ENCODE measurements at regions of chr4 and their contacts with region 1.

Region 1: GRCh38 chr4:83074086-83074704 is 39.2 kb downstream of the COPS4 start:
- DNase-seq: peak; percentile 70
- H3K4me3 Mint-ChIP-seq: peak overlapping the region; percentile 45
- H3K27ac Mint-ChIP-seq: peak overlapping the region; percentile 74
- H3K4me1 Mint-ChIP-seq: peaks cover 18% of the 10 kb centered on the region
- H3K27me3 Mint-ChIP-seq: no peaks in the 10 kb centered on the region

Region 2: DNA sequence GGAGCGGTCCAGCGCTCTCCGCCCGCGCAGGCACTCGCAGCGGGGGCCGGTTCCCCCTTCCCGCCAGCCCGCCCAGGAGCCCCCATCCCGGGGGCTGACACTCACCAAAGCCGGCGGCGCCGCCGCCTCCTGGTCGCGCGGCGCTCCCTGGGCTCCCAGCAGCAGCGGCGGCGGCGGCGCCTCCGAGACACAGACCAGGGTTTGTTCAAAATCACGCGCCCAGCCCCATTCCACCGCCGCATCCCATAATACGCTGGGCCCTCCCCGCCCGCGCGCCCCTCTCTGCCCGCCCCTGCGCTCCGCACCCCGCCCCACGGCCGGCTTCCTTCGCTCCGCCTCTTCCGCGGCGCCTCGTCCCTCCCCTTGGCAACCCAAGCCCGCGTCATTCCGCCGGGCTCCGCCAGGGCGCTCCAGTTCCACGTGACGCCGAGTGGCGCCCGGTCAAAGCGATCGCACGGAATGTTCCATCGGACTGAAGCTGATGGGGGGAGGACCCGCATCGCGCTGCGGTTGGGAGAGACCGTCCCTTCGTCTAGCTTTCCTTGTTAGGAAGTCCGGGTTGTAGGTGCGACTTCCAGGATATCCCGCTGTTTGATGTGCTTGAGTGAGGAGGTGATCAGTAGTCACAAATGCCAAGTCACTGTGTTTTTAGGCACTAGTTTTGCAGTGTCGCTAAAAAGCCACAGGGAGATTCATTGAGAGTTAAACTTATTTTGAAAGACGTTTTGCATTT is 61.3 kb before region 1 on chr4:
- CTCF ChIA-PET with region 1: no interaction called
- DNase-seq: peak; percentile 97
- H3K4me3 Mint-ChIP-seq: peak overlapping the region; percentile 91
- H3K27ac Mint-ChIP-seq: peak overlapping the region; percentile 94
- H3K4me1 Mint-ChIP-seq: peaks cover 43% of the 10 kb centered on the region
- H3K27me3 Mint-ChIP-seq: no peaks in the 10 kb centered on the region

Region 3: DNA sequence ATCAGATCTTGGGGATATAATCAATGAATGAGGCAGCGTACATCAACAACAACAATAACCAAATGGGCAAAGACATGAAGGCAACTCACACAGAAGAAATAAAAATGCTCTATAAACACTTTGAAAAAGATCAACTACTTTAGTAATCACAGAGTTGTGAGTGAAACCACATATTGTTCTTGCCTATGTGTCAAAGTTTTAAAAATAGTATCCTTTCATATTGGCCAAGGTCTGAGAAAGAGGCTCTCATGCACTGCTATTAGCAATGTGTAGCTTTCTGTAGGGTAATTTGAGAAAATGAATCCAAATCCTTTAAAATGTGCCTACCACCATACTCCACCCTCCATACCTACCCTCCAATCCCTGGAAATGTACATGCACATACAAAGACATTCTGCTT is 185.4 kb after region 1 on chr4:
- CTCF ChIA-PET with region 1: interaction called, 24 read pairs
- DNase-seq: no peak
- H3K4me3 Mint-ChIP-seq: no peak overlapping the region
- H3K27ac Mint-ChIP-seq: no peak overlapping the region
- H3K4me1 Mint-ChIP-seq: peaks cover 18% of the 10 kb centered on the region
- H3K27me3 Mint-ChIP-seq: no peaks in the 10 kb centered on the region

Region 4: GRCh38 chr4:83267121-83267829 is 193.1 kb after region 1 on chr4:
- CTCF ChIA-PET with region 1: interaction called, 24 read pairs
- DNase-seq: no peak
- H3K4me3 Mint-ChIP-seq: no peak overlapping the region
- H3K27ac Mint-ChIP-seq: no peak overlapping the region
- H3K4me1 Mint-ChIP-seq: peaks cover 6% of the 10 kb centered on the region
- H3K27me3 Mint-ChIP-seq: no peaks in the 10 kb centered on the region